HEK293 (cell line): ENCODE measurements at regions of chr18 and their contacts with region 1.

Region 1: DNA sequence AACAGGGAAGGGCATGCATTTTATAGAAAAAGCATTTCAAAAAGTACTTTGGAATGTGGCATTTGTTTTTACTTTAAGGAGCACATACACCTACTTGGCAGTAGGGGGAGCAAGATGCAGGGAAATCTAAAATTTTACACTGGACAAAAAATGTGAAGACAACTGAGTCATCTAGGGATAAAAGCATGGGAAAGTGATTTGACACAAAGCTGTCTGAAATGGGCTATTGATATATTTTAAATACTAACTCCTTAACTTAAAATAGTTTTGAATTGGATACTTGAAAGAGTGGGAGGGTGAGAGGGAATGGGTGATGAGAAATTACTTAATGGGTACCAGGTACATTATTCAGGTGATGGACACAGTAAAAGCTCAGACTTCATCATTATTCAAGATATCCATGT is 15.8 kb downstream of the TMEM200C start:
- H3K4me3 ChIP-seq: no peak overlapping the region
- H3K27ac ChIP-seq: no peak overlapping the region
- H3K4me1 ChIP-seq: no peaks in the 10 kb centered on the region
- CTCF ChIP-seq: peak; percentile 62

Region 2: GRCh38 chr18:5704847-5705246 is 174.6 kb before region 1 on chr18:
- CTCF ChIA-PET with region 1: no interaction called
- POLR2A ChIA-PET with region 1: no interaction called
- H3K4me3 ChIP-seq: no peak overlapping the region
- H3K27ac ChIP-seq: no peak overlapping the region
- H3K4me1 ChIP-seq: no peaks in the 10 kb centered on the region
- CTCF ChIP-seq: no peak

Region 3: GRCh38 chr18:5868218-5869115 is 11.0 kb before region 1 on chr18:
- CTCF ChIA-PET with region 1: interaction called, 16 read pairs
- POLR2A ChIA-PET with region 1: no interaction called
- H3K4me3 ChIP-seq: no peak overlapping the region
- H3K27ac ChIP-seq: no peak overlapping the region
- H3K4me1 ChIP-seq: no peaks in the 10 kb centered on the region
- CTCF ChIP-seq: peak; percentile 52

Region 4: DNA sequence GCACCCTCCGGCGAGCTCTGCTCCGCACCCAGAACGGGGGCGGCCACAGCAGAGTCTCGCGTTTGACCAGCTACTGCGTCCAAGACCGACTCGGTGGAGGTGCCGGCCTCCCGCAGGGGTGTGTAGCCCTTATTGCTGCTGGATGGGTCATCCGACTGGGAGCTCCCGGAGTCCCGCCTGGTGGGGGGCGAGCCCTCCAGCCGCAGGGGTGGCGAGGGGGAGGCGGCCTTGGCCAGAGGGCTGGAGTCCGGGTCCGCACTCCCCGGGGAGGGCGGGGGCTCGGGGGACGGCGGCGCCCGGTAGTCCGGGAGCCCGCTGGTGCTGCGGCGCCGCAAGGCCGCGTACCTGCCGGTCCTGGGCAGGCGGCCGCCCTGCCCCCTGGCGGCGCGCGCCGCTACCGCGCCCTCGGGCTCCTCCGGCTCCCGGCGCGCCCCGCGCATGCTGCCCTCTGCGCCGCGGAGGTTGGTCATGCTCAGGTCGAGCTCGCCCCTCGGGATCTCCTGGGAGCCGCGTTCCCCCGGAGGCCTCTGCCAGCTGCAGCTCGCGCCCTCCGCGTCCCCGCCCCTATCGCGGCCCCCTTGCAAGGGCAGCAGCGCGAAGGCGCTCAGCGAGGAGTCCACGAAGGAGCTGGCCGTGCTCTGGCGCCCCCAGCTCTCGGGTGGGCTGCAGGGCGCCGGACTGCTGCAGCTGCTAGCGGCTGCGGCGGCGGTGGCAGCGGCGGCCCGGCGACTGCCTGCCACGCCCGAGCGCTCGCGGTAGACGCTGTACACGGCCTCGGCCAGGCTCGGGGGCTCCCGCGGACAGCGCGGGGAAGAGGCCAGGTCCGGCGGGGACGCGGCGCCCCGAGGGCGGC is 11.1 kb after region 1 on chr18:
- CTCF ChIA-PET with region 1: interaction called, 69 read pairs
- POLR2A ChIA-PET with region 1: interaction called, 3 read pairs
- H3K4me3 ChIP-seq: peak overlapping the region; percentile 38
- H3K27ac ChIP-seq: peak overlapping the region; percentile 56; the same call in 1 of the 2 replicates
- H3K4me1 ChIP-seq: peaks cover 20% of the 10 kb centered on the region
- CTCF ChIP-seq: no peak

Region 5: DNA sequence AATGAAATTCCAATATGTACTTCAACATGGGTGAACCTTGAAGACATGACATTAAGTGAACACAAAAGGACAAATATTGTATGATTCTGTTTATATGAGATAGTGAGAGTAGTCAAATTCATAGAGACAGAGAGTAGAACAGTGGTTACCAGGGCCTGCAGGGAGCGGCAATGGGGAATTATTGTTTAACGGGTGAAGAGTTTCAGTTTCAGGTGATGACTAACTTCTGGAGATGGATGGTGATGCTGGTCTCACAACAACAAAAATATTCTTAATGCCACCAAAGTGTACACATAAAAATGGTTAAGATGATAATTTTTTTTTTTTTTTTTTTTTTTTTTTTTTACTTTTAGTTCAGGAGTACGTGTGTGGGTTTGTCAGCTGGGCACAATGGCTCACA is 125.2 kb after region 1 on chr18:
- CTCF ChIA-PET with region 1: no interaction called
- POLR2A ChIA-PET with region 1: no interaction called
- H3K4me3 ChIP-seq: no peak overlapping the region
- H3K27ac ChIP-seq: no peak overlapping the region
- H3K4me1 ChIP-seq: peaks cover 8% of the 10 kb centered on the region; the same call in 1 of the 2 replicates
- CTCF ChIP-seq: no peak

Region 6: DNA sequence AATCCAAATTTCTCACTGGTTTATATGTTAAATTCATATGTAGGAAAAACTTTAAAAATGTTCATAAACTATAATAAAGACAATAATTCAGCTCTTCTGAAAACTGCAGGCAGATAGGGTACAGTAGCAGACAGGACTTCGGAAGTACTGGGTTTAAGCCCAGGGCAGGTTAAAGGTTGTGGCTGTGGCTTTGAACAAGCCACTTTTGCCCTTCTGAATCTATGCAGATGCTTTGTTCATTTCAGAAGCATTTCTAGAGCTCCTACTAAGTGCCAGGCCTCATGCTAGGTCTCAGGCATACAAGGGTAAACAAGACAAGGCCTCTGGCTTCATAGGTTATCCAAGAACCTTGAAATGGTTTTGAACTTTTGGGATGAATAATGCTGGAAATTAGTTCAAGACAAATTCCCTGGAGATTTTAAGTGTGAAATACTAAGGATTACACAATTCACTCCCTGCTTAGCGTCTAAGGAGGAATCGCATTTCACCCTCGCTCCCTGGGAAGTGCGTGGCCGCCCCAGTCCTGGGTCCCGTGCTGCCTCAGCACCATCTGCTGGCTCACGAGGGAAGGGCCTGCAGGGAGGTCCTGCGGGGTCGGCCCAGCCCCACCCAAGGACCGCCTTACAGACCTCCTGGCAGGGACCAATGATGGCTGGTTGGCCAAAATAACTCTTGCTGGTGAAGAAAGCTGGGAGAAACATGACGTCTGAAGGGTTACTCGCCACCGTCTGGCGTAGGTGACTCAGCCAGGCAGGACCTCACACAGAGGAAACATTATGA is 602.9 kb after region 1 on chr18:
- CTCF ChIA-PET with region 1: interaction called, 29 read pairs
- POLR2A ChIA-PET with region 1: no interaction called
- H3K4me3 ChIP-seq: no peak overlapping the region
- H3K27ac ChIP-seq: no peak overlapping the region
- H3K4me1 ChIP-seq: 0 out of 2 replicates have a peak, but pooled peaks cover 2% of the 10 kb centered on the region
- CTCF ChIP-seq: peak; percentile 92

Region 7: DNA sequence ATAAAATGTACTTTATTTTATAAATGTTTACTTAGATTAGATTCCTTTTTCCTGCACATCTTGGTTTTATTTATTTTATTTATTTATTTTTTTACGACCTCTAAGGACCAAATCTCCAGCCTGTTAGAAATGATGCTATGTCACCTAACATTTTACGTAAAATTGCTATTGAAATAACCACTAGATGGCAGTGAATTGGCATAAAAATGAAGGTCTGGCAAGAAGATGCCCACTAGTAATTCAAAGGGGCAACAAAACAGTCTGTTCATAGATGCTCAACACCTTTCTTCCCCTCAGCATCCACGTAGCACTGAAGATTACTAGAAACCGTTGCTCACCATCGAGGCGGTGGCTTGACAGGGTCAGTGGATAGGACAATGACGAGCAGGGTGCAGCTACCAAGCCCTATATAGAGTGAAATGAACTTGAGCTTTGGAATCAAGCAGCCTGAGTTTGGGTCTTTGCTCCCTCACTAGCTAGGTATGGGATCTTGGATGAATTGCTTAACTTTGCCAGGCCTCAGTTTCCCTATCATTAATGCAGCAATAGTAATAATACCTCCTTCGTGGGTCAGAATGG is 663.9 kb after region 1 on chr18:
- CTCF ChIA-PET with region 1: interaction called, 12 read pairs
- POLR2A ChIA-PET with region 1: no interaction called
- H3K4me3 ChIP-seq: no peak overlapping the region
- H3K27ac ChIP-seq: no peak overlapping the region
- H3K4me1 ChIP-seq: no peaks in the 10 kb centered on the region; the same call in 1 of the 2 replicates
- CTCF ChIP-seq: peak; percentile 52; the same call in 1 of the 2 replicates